ENCODE measurements at regions of chr7 and their contacts with region 1.

Region 1: GRCh38 chr7:116525913-116526861 is 1.4 kb downstream of the CAV1 start:
- DNase-seq: peak; percentile 85
- ATAC-seq: peak; percentile 60
- H3K4me3 ChIP-seq: peak overlapping the region; percentile 97
- H3K27ac ChIP-seq: peak overlapping the region; percentile 74
- H3K4me1 ChIP-seq: peaks cover 72% of the 10 kb centered on the region
- H3K27me3 ChIP-seq: no peaks in the 10 kb centered on the region
- CTCF ChIP-seq: peak; percentile 75

Region 2: GRCh38 chr7:116135306-116135705 is 390.9 kb before region 1 on chr7:
- CTCF ChIA-PET with region 1: no interaction called
- POLR2A ChIA-PET with region 1: no interaction called
- intact Hi-C with region 1: no loop called
- DNase-seq: no peak
- ATAC-seq: no peak
- H3K4me3 ChIP-seq: no peak overlapping the region
- H3K27ac ChIP-seq: no peak overlapping the region
- H3K4me1 ChIP-seq: peaks cover 14% of the 10 kb centered on the region
- H3K27me3 ChIP-seq: no peaks in the 10 kb centered on the region
- CTCF ChIP-seq: no peak

Region 3: GRCh38 chr7:116173051-116174028 is 352.8 kb before region 1 on chr7:
- CTCF ChIA-PET with region 1: interaction called, 5 read pairs
- POLR2A ChIA-PET with region 1: interaction called, 3 read pairs
- intact Hi-C with region 1: loop called (anchors 2 kb)
- DNase-seq: peak; percentile 83
- ATAC-seq: peak; percentile 37
- H3K4me3 ChIP-seq: peak overlapping the region; percentile 48
- H3K27ac ChIP-seq: peak overlapping the region; percentile 55
- H3K4me1 ChIP-seq: peaks cover 35% of the 10 kb centered on the region
- H3K27me3 ChIP-seq: no peaks in the 10 kb centered on the region
- CTCF ChIP-seq: peak; percentile 72

Region 4: GRCh38 chr7:116290740-116291139 is 235.4 kb before region 1 on chr7:
- CTCF ChIA-PET with region 1: no interaction called
- POLR2A ChIA-PET with region 1: interaction called, 10 read pairs
- intact Hi-C with region 1: no loop called
- DNase-seq: no peak
- ATAC-seq: 0 out of 2 replicates have a peak, but pooled peaks have one; percentile 16
- H3K4me3 ChIP-seq: no peak overlapping the region
- H3K27ac ChIP-seq: no peak overlapping the region
- H3K4me1 ChIP-seq: peaks cover 11% of the 10 kb centered on the region; the same call in 1 of the 2 replicates
- H3K27me3 ChIP-seq: no peaks in the 10 kb centered on the region
- CTCF ChIP-seq: no peak

Region 5: DNA sequence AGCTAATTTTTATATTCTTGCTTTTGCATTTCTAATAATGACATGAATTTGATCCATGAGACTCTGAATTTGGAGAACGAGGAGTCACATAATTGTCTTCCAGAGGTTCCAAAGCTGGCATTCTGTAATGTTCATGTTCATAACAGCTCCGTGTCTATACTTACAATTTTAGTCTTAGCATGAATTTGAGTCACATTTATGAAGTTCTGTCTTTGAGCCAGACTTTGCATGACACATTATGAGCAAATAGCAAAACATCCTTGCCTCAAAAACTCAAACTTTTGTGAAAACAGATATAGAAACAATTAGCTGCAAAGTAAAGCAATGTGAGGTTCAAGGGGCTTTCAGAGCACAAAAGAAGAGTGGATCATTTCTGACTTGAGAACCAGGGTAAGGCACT is 71.2 kb before region 1 on chr7:
- CTCF ChIA-PET with region 1: interaction called, 6 read pairs
- POLR2A ChIA-PET with region 1: interaction called, 5 read pairs
- intact Hi-C with region 1: loop called (anchors 2 kb)
- DNase-seq: peak; percentile 84
- ATAC-seq: peak; percentile 87
- H3K4me3 ChIP-seq: peak overlapping the region; percentile 7; the same call in 1 of the 2 replicates
- H3K27ac ChIP-seq: peak overlapping the region; percentile 61
- H3K4me1 ChIP-seq: peaks cover 22% of the 10 kb centered on the region
- H3K27me3 ChIP-seq: no peaks in the 10 kb centered on the region
- CTCF ChIP-seq: no peak

Region 6: GRCh38 chr7:116511552-116512519 is 14.4 kb before region 1 on chr7:
- CTCF ChIA-PET with region 1: interaction called, 9 read pairs
- POLR2A ChIA-PET with region 1: interaction called, 4 read pairs
- intact Hi-C with region 1: loop called (anchors 1 kb)
- DNase-seq: peak; percentile 93
- ATAC-seq: peak; percentile 83
- H3K4me3 ChIP-seq: peak overlapping the region; percentile 56
- H3K27ac ChIP-seq: peak overlapping the region; percentile 79
- H3K4me1 ChIP-seq: peaks cover 34% of the 10 kb centered on the region
- H3K27me3 ChIP-seq: no peaks in the 10 kb centered on the region
- CTCF ChIP-seq: no peak

Region 7: GRCh38 chr7:116653204-116653603 is 127.0 kb after region 1 on chr7:
- CTCF ChIA-PET with region 1: no interaction called
- POLR2A ChIA-PET with region 1: no interaction called
- intact Hi-C with region 1: no loop called
- DNase-seq: peak; percentile 75
- ATAC-seq: peak; percentile 99
- H3K4me3 ChIP-seq: no peak overlapping the region
- H3K27ac ChIP-seq: no peak overlapping the region
- H3K4me1 ChIP-seq: peaks cover 12% of the 10 kb centered on the region
- H3K27me3 ChIP-seq: no peaks in the 10 kb centered on the region
- CTCF ChIP-seq: no peak

Region 8: DNA sequence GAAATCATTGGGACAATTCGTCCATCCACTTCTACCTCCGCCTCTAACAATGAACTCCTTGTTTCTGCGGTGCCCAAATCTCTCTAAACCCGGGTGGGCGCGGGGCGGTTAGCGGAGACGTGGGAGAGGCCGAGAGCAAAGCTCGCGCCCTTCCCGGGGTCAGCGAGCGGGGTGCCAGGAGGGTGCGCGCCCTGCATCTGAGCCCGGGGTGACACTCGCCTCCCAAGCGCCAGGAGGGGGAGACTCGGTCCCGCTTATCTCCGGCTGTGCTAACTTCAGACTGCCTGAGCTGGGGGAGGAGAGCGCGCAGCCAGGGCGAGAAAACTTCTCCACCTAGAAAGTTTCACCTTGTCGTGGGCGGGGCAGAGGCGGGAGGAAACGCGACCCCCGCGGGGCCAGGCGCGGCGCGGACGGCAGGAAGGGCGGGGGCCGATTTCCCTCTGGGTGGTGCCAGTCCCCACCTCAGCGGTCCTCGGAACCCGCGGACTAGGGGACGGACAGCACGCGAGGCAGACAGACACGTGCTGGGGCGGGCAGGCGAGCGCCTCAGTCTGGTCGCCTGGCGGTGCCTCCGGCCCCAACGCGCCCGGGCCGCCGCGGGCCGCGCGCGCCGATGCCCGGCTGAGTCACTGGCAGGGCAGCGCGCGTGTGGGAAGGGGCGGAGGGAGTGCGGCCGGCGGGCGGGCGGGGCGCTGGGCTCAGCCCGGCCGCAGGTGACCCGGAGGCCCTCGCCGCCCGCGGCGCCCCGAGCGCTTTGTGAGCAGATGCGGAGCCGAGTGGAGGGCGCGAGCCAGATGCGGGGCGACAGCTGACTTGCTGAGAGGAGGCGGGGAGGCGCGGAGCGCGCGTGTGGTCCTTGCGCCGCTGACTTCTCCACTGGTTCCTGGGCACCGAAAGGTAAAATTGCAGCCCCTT is 145.8 kb after region 1 on chr7 and contains the start of gene MET:
- CTCF ChIA-PET with region 1: no interaction called
- POLR2A ChIA-PET with region 1: no interaction called
- intact Hi-C with region 1: loop called (anchors 10 kb)
- DNase-seq: peak; percentile 90
- ATAC-seq: peak; percentile 76
- H3K4me3 ChIP-seq: peak within 1 kb of the TSS; percentile 99
- H3K27ac ChIP-seq: peak within 1 kb of the TSS; percentile 93
- H3K4me1 ChIP-seq: peaks cover 28% of the 10 kb centered on the region
- H3K27me3 ChIP-seq: no peaks in the 10 kb centered on the region
- CTCF ChIP-seq: peak; percentile 71
- total RNA-seq, gene MET: 109 and 118 TPM in 2 replicates

Region 9: GRCh38 chr7:117645456-117646181 is 1119.4 kb after region 1 on chr7:
- CTCF ChIA-PET with region 1: no interaction called
- POLR2A ChIA-PET with region 1: no interaction called
- intact Hi-C with region 1: no loop called
- DNase-seq: peak; percentile 43
- ATAC-seq: no peak
- H3K4me3 ChIP-seq: no peak overlapping the region
- H3K27ac ChIP-seq: no peak overlapping the region
- H3K4me1 ChIP-seq: peaks cover 4% of the 10 kb centered on the region; the same call in 1 of the 2 replicates
- H3K27me3 ChIP-seq: no peaks in the 10 kb centered on the region
- CTCF ChIP-seq: no peak

Measured in PC-3 (cell line).